A673 (cell line): ENCODE measurements at regions of chr2 and their contacts with region 1.

Region 1: GRCh38 chr2:6773007-6773693 is 92.6 kb downstream of the CMPK2 start:
- DNase-seq: peak; percentile 61
- H3K4me3 ChIP-seq: no peak overlapping the region
- H3K27ac ChIP-seq: no peak overlapping the region
- H3K4me1 ChIP-seq: peaks cover 11% of the 10 kb centered on the region
- H3K27me3 ChIP-seq: no peaks in the 10 kb centered on the region
- CTCF ChIP-seq: peak; percentile 97

Region 2: GRCh38 chr2:5077439-5078089 is 1695.6 kb before region 1 on chr2:
- CTCF ChIA-PET with region 1: no interaction called
- POLR2A ChIA-PET with region 1: no interaction called
- intact Hi-C with region 1: loop called (anchors 10 kb)
- DNase-seq: peak; percentile 85
- H3K4me3 ChIP-seq: no peak overlapping the region
- H3K27ac ChIP-seq: no peak overlapping the region
- H3K4me1 ChIP-seq: peaks cover 10% of the 10 kb centered on the region
- H3K27me3 ChIP-seq: no peaks in the 10 kb centered on the region
- CTCF ChIP-seq: peak; percentile 47

Region 3: DNA sequence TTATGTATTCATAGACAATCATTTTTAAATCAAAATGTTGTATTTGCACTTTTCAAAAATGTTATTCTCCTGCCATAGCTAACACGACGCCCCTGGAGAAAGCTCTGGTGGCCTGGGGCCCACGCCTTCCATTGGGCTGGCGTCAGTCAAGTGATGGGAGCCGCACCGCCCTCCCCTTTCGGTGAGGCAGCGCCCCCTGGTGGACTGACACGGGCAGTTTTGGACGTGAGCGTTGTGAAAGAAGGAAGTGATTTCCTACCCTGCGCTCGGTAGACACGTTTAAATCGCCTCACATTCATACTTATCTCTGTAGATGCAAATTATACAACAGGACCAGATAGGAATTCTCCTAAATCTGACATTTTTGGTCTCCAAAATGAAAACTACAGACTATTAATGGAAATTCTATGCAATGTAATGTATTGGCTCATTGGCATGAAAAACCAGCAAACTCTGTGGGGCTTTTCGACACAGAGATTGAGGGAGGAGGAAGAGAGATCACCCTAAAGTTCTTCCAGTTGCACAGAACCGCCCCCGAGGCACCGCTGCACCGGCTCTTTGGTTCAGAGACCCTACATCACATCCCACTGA is 1407.2 kb before region 1 on chr2:
- CTCF ChIA-PET with region 1: no interaction called
- POLR2A ChIA-PET with region 1: no interaction called
- intact Hi-C with region 1: loop called (anchors 10 kb)
- DNase-seq: peak; percentile 92
- H3K4me3 ChIP-seq: no peak overlapping the region
- H3K27ac ChIP-seq: no peak overlapping the region
- H3K4me1 ChIP-seq: peaks cover 4% of the 10 kb centered on the region
- H3K27me3 ChIP-seq: no peaks in the 10 kb centered on the region
- CTCF ChIP-seq: peak; percentile 96

Region 4: GRCh38 chr2:6352906-6353515 is 420.1 kb before region 1 on chr2:
- CTCF ChIA-PET with region 1: interaction called, 5 read pairs
- POLR2A ChIA-PET with region 1: no interaction called
- intact Hi-C with region 1: loop called (anchors 2 kb)
- DNase-seq: peak; percentile 81
- H3K4me3 ChIP-seq: no peak overlapping the region
- H3K27ac ChIP-seq: no peak overlapping the region
- H3K4me1 ChIP-seq: peaks cover 6% of the 10 kb centered on the region
- H3K27me3 ChIP-seq: no peaks in the 10 kb centered on the region
- CTCF ChIP-seq: peak; percentile 79

Region 5: GRCh38 chr2:6452702-6453481 is 320.3 kb before region 1 on chr2:
- CTCF ChIA-PET with region 1: no interaction called
- POLR2A ChIA-PET with region 1: no interaction called
- intact Hi-C with region 1: loop called (anchors 5 kb)
- DNase-seq: peak; percentile 71
- H3K4me3 ChIP-seq: no peak overlapping the region
- H3K27ac ChIP-seq: no peak overlapping the region
- H3K4me1 ChIP-seq: peaks cover 8% of the 10 kb centered on the region
- H3K27me3 ChIP-seq: no peaks in the 10 kb centered on the region
- CTCF ChIP-seq: peak; percentile 52

Region 6: DNA sequence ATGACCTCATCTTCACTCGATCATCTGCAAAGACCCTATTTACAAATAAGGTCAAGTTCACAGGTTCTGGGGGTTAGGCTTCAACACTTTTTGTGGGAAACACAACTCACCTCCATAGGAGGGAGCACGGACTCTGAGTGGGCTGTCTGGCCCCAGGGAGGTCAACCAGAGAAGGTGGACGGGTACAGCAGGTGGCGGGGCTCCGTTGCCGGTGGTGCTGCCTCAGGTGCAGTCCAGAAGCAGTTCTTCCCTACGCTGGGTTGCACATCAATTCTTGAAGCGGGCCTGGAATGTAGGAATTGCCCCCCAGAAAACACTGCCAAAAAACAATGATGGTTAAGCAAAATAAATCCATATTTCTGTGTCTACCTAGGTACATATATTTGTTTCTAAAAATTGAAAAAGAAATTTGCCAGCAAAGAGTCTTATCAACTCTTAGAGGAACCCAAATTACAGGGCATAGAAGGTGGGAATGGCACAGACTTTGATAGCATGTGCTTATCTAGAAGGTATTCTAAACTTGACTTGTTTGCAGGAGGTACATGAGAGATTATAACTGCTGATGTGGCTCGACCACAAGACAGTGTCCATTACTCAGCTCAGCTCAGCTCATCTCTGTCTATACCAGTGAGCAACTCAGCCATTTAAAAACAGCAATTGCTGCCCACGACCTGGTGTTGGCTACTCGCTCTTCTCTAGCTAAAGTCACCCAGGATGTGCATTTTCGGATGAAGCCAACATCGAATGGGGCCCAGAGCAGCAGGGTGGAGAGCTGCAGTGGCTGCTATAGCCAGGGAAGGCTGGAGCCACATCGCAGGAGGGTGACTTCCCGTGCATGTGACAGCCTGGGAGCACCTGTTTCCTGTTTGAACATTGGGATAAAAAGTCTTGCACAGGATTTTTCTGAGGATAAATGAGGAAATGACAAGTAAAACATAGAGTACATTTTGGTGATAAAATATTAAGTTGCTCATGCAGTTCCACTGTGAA is 272.7 kb after region 1 on chr2:
- CTCF ChIA-PET with region 1: no interaction called
- POLR2A ChIA-PET with region 1: no interaction called
- intact Hi-C with region 1: no loop called
- DNase-seq: no peak
- H3K4me3 ChIP-seq: no peak overlapping the region
- H3K27ac ChIP-seq: no peak overlapping the region
- H3K4me1 ChIP-seq: no peaks in the 10 kb centered on the region
- H3K27me3 ChIP-seq: no peaks in the 10 kb centered on the region
- CTCF ChIP-seq: no peak